ENCODE measurements at regions of chr10 and their contacts with region 1.

Region 1: DNA sequence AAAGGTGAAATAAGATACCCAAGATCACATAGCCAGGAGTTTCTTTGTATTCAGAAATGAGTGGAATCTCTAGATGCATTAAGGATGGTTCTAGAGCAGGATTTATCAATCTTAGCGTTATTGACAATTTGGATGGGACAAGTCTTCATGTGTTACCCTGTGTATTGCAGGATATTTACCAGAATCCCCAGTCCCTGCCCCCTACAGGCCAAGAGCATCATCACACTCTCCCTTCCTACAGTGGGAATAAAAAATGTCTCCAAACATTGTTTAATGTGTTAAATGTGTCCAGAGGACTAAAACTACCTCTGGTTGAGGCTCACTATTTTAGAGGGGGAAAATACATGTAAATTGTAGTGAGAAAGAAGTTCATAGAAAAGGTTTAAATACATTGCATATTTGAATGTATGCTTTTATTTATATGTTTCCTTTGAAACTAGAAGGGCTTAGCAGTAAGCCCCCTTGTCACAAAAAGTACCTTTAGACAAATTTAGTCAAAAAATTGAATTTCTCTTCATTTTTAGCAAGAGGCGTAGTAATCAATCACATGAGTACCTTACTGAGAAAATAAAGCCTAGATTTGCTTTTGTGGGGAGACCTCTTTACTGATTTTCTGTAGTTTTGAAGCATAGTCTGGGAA is 141.2 kb downstream of the MLLT10 start:
- DNase-seq: no peak
- H3K4me3 Mint-ChIP-seq: no peak overlapping the region
- H3K27ac Mint-ChIP-seq: no peak overlapping the region
- H3K4me1 Mint-ChIP-seq: peaks cover 5% of the 10 kb centered on the region
- H3K27me3 Mint-ChIP-seq: no peaks in the 10 kb centered on the region

Region 2: GRCh38 chr10:21572578-21572977 is 102.7 kb before region 1 on chr10:
- intact Hi-C with region 1: loop called (anchors 10 kb)
- DNase-seq: no peak
- H3K4me3 Mint-ChIP-seq: no peak overlapping the region
- H3K27ac Mint-ChIP-seq: no peak overlapping the region
- H3K4me1 Mint-ChIP-seq: peaks cover 31% of the 10 kb centered on the region
- H3K27me3 Mint-ChIP-seq: no peaks in the 10 kb centered on the region

Region 3: GRCh38 chr10:21661935-21662334 is 13.3 kb before region 1 on chr10:
- intact Hi-C with region 1: no loop called
- DNase-seq: no peak
- H3K4me3 Mint-ChIP-seq: no peak overlapping the region
- H3K27ac Mint-ChIP-seq: no peak overlapping the region
- H3K4me1 Mint-ChIP-seq: peaks cover 26% of the 10 kb centered on the region
- H3K27me3 Mint-ChIP-seq: no peaks in the 10 kb centered on the region